ENCODE measurements at regions of chr7 and their contacts with region 1.

Region 1: DNA sequence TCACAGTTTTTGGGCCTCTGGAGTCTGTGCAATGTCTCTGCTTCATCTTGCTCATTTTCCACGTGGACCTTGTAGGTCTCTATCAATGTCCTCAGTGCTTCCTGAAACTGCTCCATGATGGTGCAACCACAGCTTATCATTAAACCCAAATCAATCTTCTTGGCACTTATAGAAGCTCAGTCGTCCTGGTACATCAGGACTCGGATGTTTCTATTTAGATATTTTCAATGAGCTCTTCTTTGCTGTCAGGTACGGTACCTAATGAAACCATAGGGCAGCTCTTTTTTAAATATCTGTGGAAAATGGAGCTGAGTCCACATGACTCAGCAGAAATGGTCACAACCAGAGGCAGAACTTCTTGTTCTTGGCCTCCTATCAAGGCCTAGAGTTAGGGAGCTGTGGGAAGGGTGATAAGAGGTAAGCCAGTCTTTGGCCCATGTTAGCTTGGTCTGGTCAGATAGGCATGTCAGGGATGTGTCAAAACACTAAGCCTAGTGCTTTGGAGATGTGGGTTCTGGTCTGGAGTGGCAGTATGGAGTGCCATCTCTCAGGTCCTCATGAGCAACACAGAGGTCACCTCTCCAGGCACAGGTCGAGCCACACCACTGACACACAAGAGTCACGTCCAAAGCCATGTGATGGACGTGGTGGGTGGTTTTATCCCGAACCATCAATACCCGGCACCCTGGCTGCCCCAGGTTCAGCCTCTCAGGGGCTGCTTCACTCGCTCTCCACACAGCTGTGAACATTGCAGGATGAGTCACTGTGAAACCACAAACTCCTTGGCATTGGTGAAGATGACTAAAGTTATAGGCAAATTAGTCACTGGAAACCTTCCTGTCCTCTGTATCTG is 87.0 kb downstream of the TBXAS1 start:
- DNase-seq: peak; percentile 91
- ATAC-seq: peak; percentile 94
- H3K4me3 ChIP-seq: no peak overlapping the region
- H3K27ac ChIP-seq: peak overlapping the region; percentile 88
- H3K4me1 ChIP-seq: peaks cover 29% of the 10 kb centered on the region
- H3K27me3 ChIP-seq: no peaks in the 10 kb centered on the region
- CTCF ChIP-seq: no peak
- EP300 ChIP-seq: peak in 1 of 2 experiments; percentile 71; a peak in 1 of 4 replicates
- POLR2A ChIP-seq: peak; percentile 58
- RAD21 ChIP-seq: peak; percentile 24; the same call in 1 of the 2 replicates

Region 2: GRCh38 chr7:139557857-139558581 is 358.1 kb before region 1 on chr7:
- CTCF ChIA-PET with region 1: no interaction called
- POLR2A ChIA-PET with region 1: no interaction called
- RAD21 ChIA-PET with region 1: no interaction called
- SMC1A ChIA-PET with region 1: no interaction called
- in situ Hi-C with region 1: no loop called
- intact Hi-C with region 1: no loop called
- DNase-seq: no peak
- ATAC-seq: no peak
- H3K4me3 ChIP-seq: no peak overlapping the region
- H3K27ac ChIP-seq: no peak overlapping the region
- H3K4me1 ChIP-seq: no peaks in the 10 kb centered on the region
- H3K27me3 ChIP-seq: no peaks in the 10 kb centered on the region
- CTCF ChIP-seq: no peak
- EP300 ChIP-seq: no peak
- POLR2A ChIP-seq: no peak
- RAD21 ChIP-seq: no peak

Region 3: DNA sequence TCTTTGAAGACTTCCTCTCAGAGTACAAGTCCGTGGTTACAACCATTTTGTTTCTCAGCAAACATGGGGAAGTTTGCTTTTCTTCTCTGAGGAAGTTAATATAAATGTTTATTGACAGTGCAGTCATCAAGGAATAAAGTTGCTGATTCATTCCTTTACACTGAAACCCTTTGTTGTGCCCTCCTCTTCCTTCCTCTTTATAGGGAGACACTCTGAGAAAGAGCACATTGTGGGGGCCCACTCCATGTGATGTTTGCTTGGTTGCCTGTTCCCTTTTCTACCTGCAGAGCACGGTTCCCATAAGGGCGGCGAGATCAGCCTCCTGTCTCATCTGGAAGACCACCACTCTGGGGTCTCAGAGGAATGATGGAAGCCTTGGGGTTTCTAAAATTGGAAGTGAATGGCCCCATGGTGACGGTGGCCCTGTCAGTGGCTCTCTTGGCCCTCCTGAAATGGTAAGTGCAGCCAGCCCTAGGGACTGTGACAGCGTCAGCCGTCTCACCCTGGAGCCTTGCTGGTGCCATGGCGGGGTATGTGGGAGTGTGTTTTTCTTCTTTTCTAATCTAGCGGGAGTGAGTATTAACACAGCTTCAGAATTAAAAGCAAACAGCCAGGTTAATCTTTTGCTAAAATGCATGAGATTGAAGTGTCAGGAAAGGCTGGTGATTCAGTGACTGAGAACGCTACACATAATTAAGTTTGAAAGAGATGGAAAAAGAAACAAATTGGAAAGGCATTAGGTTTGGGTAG is 86.9 kb before region 1 on chr7 and contains the start of gene TBXAS1:
- CTCF ChIA-PET with region 1: no interaction called
- POLR2A ChIA-PET with region 1: no interaction called
- RAD21 ChIA-PET with region 1: interaction called, 12 read pairs
- SMC1A ChIA-PET with region 1: interaction called, 11 read pairs
- in situ Hi-C with region 1: no loop called
- intact Hi-C with region 1: no loop called
- DNase-seq: no peak
- ATAC-seq: peak; percentile 74
- H3K4me3 ChIP-seq: peak within 1 kb of the TSS; percentile 54
- H3K27ac ChIP-seq: peak within 1 kb of the TSS; percentile 81
- H3K4me1 ChIP-seq: peaks cover 26% of the 10 kb centered on the region
- H3K27me3 ChIP-seq: peaks cover 0 to 1% of the 10 kb centered on the region in 2 experiments; a peak in 1 of 4 replicates
- CTCF ChIP-seq: no peak
- EP300 ChIP-seq: no peak
- POLR2A ChIP-seq: peak; percentile 63; the same call in 1 of the 2 replicates
- RAD21 ChIP-seq: no peak
- polyA plus RNA-seq, gene TBXAS1: 6.8 to 8.3 TPM

Region 4: GRCh38 chr7:139889186-139889871 is 26.8 kb before region 1 on chr7:
- CTCF ChIA-PET with region 1: interaction called, 4 read pairs
- POLR2A ChIA-PET with region 1: interaction called, 3 read pairs
- RAD21 ChIA-PET with region 1: interaction called, 13 read pairs
- SMC1A ChIA-PET with region 1: interaction called, 34 read pairs
- in situ Hi-C with region 1: no loop called
- intact Hi-C with region 1: no loop called
- DNase-seq: no peak
- ATAC-seq: no peak
- H3K4me3 ChIP-seq: no peak overlapping the region
- H3K27ac ChIP-seq: no peak overlapping the region
- H3K4me1 ChIP-seq: peaks cover 5% of the 10 kb centered on the region; the same call in 1 of the 2 replicates
- H3K27me3 ChIP-seq: no peaks in the 10 kb centered on the region
- CTCF ChIP-seq: no peak
- EP300 ChIP-seq: no peak
- POLR2A ChIP-seq: no peak
- RAD21 ChIP-seq: 0 out of 2 replicates have a peak, but pooled peaks have one; percentile 1

Region 5: DNA sequence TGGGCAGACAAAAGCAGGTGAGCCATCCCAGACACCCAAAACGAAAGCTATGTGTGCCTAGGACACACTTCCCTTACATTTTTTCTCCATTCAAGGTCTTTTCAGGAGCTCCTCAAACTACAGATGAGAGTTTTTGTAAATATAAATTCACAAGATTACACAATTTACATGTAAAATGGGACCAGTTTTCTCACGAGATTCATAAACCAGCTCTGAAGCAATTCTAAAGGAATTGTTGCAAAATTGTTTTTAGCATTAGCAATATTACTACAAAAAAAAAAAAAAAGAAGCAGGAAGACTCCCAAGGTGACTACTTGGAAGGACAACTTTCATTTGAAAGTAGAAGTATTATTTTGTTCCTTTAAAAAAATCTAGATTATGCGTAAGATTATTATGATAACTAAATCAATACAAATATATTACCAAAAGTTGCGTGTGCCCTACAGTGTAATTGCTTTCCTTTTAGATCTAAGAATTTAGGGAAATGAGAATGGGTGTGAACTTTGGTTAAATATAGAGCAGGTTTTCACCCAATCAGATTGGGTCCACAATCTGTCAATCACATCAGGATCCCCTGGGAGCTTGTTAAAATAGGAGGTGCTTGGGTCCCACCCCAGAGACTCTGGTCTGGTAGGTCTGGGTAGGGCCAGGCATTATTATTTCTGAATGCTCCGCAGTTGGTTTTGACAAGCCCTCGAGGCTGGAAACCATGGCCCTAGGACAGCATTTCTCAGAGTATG is 14.9 kb before region 1 on chr7:
- CTCF ChIA-PET with region 1: interaction called, 17 read pairs
- POLR2A ChIA-PET with region 1: interaction called, 6 read pairs
- RAD21 ChIA-PET with region 1: interaction called, 10 read pairs
- SMC1A ChIA-PET with region 1: interaction called, 45 read pairs
- in situ Hi-C with region 1: no loop called
- intact Hi-C with region 1: no loop called
- DNase-seq: no peak
- ATAC-seq: no peak
- H3K4me3 ChIP-seq: no peak overlapping the region
- H3K27ac ChIP-seq: no peak overlapping the region
- H3K4me1 ChIP-seq: peaks cover 3% of the 10 kb centered on the region; the same call in 1 of the 2 replicates
- H3K27me3 ChIP-seq: no peaks in the 10 kb centered on the region
- CTCF ChIP-seq: no peak
- EP300 ChIP-seq: no peak
- POLR2A ChIP-seq: no peak
- RAD21 ChIP-seq: no peak